RWPE1 (cell line): ENCODE measurements at regions of chr17 and their contacts with region 1.

Region 1: GRCh38 chr17:17156107-17156506 is 50.0 kb downstream of the PLD6 start:
- DNase-seq: peak; percentile 71
- H3K27ac ChIP-seq: peak overlapping the region; percentile 92
- CTCF ChIP-seq: no peak

Region 2: DNA sequence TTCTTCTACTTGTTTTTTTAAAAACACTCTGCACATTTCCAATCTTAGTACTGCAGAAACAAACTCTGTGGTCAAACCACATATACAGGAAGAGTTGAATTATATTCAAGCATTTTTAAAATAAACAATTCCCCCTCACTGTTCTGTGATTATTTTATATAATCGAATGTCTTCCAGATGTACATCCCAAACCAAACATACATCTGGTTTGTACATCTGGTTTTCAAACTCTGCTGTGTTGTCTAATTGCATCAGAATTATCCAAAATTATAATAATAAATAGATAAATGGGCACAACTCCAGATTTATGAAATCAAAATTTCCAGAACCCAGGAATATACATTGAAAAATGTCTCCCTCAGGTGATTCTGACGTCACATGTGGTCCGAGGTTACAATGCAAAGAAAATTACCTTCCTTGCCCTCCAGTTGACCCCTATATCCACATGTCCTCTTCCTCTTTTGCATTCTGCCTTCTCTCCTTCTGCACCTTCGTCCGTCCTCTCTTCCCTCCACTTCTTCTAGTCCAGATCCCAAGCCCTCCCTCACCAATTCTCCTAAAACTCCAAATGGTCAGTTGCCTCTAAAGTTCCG is 479.3 kb before region 1 on chr17:
- CTCF ChIA-PET with region 1: interaction called, 12 read pairs
- POLR2A ChIA-PET with region 1: no interaction called
- DNase-seq: no peak
- H3K27ac ChIP-seq: no peak overlapping the region
- CTCF ChIP-seq: no peak

Region 3: GRCh38 chr17:17108451-17109049 is 47.6 kb before region 1 on chr17:
- CTCF ChIA-PET with region 1: no interaction called
- POLR2A ChIA-PET with region 1: no interaction called
- DNase-seq: no peak
- H3K27ac ChIP-seq: peak overlapping the region; percentile 79
- CTCF ChIP-seq: no peak